Cardiac septum (tissue), 1 donor: ENCODE measurements at regions of chr2 and their contacts with region 1.

Region 1: GRCh38 chr2:55268907-55269644 is at the start of gene MTIF2:
- DNase-seq: peak; percentile 97
- total RNA-seq, gene MTIF2: 40.8 TPM

Region 2: DNA sequence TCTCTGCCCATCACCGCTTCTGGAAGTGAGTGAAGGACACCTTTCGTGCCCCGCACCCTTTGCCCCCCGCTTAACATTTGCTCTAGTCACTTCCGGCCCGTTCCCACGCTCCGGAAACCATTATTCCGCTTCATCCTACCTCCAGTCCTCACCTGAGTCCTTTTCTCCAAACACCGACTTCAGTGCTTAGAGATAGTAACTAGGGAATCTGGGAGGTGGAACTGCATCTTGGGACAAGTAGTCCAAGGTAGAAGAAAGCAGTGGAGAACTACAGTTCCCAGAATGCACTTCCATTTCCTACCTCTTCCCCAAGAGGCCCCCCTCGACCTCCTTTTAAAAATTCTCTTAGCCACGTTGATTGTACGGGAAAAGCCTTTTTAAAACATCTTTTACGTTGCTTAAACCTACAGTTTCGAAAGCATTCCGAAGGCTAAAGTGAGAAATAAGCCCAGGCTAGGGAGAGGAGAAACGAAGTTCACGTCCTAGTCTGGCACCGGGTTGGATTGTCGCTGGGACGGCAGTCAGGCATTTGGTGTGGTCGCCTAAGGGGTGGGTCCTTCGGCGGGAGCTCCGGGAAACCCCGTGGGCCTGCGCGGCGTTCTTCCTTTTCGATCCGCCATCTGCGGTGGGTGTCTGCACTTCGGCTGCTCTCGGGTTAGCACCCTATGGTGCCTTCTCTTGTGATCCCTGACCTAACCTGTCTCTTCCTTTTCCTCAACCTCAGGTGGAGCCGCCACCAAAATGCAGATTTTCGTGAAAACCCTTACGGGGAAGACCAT is 36.8 kb before region 1 on chr2 and contains the starts of genes CLHC1 and RPS27A:
- intact Hi-C with region 1: loop called (anchors 2 kb)
- DNase-seq: peak; percentile 96
- total RNA-seq, gene CLHC1: 8.6 TPM
- total RNA-seq, gene RPS27A: 395 TPM

Region 3: GRCh38 chr2:55282110-55282917 is 13.2 kb after region 1 on chr2:
- intact Hi-C with region 1: loop called (anchors 1 kb)
- DNase-seq: peak; percentile 97